BJ (cell line): ENCODE measurements at regions of chr3 and their contacts with region 1.

Region 1: GRCh38 chr3:55349851-55350450 is 137.2 kb downstream of the WNT5A start:
- DNase-seq: no peak
- H3K4me3 ChIP-seq: no peak overlapping the region
- H3K27me3 ChIP-seq: no peaks in the 10 kb centered on the region
- CTCF ChIP-seq: no peak

Region 2: DNA sequence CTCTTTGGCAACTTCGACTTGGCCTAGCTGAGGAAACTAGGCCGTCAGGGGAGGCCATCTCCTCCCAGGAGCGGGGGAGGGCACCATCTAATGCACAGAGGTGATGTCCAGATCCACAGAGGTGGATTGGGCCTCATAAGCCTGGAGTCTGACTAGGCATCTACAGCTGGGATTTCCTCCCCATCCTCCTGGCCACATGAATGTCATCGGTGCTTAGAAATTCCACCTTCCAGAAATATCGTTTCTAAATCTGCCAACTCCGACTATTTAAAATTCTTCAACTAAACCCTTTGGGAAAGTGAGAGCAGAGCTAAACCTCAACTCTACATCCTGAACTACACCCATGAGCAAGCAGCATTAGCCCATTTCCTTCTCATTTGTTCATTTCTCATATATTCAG is 18.4 kb after region 1 on chr3:
- CTCF ChIA-PET with region 1: no interaction called
- POLR2A ChIA-PET with region 1: interaction called, 10 read pairs
- DNase-seq: no peak
- H3K4me3 ChIP-seq: no peak overlapping the region
- H3K27me3 ChIP-seq: no peaks in the 10 kb centered on the region
- CTCF ChIP-seq: no peak